ENCODE measurements at regions of chr10 and their contacts with region 1.

Region 1: DNA sequence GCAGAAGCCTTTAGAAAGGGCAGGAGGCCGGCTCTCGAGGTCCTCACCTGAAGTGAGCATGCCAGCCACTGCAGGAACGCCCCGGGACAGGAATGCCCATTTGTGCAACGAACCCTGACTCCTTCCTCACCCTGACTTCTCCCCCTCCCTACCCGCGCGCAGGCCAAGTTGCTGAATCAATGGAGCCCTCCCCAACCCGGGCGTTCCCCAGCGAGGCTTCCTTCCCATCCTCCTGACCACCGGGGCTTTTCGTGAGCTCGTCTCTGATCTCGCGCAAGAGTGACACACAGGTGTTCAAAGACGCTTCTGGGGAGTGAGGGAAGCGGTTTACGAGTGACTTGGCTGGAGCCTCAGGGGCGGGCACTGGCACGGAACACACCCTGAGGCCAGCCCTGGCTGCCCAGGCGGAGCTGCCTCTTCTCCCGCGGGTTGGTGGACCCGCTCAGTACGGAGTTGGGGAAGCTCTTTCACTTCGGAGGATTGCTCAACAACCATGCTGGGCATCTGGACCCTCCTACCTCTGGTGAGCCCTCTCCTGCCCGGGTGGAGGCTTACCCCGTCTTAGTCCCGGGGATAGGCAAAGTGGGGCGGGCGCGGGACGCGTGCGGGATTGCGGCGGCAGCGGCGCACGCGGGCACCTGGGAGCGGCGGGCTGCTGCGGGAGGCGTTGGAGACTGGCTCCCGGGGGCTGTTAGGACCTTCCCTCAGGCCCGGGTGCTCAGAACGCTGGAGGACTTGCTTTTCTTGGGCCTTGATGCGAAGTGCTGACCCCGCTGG is at the start of gene FAS:
- DNase-seq: peak; percentile 50 to 81 (median 61)
- ATAC-seq: peak; percentile 86
- H3K4me3 ChIP-seq: peak within 1 kb of the TSS; percentile 86
- H3K4me3 Mint-ChIP-seq: peak within 1 kb of the TSS; percentile 92 to 100 (median 96)
- H3K27ac ChIP-seq: peak within 1 kb of the TSS; percentile 77
- H3K27ac Mint-ChIP-seq: peak within 1 kb of the TSS; percentile 91 to 96 (median 94)
- H3K4me1 ChIP-seq: peaks cover 42 to 45% of the 10 kb centered on the region in 2 donors
- H3K4me1 Mint-ChIP-seq: peaks cover 41 to 83% (median 68%) of the 10 kb centered on the region in 7 donors
- H3K27me3 ChIP-seq: no peaks in the 10 kb centered on the region
- H3K27me3 Mint-ChIP-seq: no peaks in the 10 kb centered on the region
- total RNA-seq, gene FAS: 5.6 to 67.4 (median 8.3) TPM

Region 2: DNA sequence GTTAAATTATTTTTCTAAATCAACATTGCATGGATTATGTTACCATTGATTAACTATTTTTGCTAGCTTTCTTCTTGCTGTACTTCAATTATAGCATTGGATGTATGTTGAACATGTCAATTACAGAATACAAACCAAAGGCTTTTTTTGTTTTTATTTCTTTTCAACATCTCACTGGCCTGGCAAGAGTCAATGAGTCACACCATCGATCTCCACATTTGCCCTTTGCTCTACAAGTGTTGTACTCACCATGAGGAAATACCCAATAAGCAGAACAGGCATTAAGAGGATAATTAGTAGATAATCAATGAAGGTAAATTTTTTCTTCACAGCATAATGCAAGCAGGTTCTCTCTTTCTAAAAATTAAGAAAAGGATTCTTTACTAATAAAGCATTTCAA is 162.3 kb before region 1 on chr10:
- CTCF ChIA-PET with region 1: no interaction called
- POLR2A ChIA-PET with region 1: no interaction called
- intact Hi-C with region 1: loop called in 1 of 2 experiments (anchors 5 kb)
- DNase-seq: no peak
- ATAC-seq: no peak
- H3K4me3 ChIP-seq: no peak overlapping the region
- H3K4me3 Mint-ChIP-seq: no peak overlapping the region
- H3K27ac ChIP-seq: no peak overlapping the region
- H3K27ac Mint-ChIP-seq: peak overlapping the region in 2 of 9 donors; percentile 49 to 98
- H3K4me1 ChIP-seq: peaks cover 40 to 68% of the 10 kb centered on the region in 2 donors
- H3K4me1 Mint-ChIP-seq: peaks cover 32 to 80% (median 73%) of the 10 kb centered on the region in 7 donors
- H3K27me3 ChIP-seq: no peaks in the 10 kb centered on the region
- H3K27me3 Mint-ChIP-seq: no peaks in the 10 kb centered on the region

Region 3: DNA sequence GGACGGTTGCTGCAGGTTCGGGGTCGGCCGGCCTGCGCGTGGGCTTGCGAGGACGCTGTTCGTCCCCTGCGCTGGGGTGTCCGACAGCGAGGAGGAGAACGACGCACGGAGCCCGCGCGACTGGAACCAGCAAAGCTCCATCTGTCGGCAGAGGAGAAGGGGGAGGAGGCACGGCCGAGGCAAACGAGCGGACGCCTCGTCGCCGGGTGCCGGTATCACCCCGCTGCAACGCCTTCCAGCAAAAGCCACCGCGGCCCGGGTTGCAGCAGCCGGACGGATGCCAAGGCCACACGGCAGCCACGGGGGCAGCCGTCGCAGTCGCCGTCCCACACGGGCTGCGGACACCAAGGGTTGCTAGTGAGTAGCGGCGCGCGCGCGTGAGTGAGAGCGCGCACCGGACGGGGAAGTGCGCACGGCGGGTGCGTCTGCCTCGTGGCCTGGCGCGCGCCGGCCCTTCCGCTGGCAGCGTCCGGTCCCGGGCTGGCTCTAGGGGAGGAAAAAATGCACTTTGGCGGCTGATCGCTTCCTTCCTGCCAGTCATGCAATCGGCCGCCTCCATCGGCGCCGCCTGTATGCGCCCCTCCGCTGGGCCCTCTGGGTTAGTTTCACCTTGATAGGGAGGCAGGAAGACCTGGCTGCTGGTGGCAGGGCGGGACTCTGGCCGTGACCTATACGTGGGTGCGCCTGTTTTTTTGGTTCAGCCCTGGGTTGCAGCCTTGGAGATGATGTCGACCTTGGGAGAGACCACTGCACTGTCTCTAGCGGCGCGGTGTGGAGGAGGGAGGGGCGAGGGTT is 110.1 kb before region 1 on chr10:
- CTCF ChIA-PET with region 1: no interaction called
- POLR2A ChIA-PET with region 1: interaction called, 5 read pairs
- intact Hi-C with region 1: loop called (anchors 1 to 2 kb)
- DNase-seq: peak; percentile 58 to 79 (median 75)
- ATAC-seq: peak; percentile 84
- H3K4me3 ChIP-seq: peak overlapping the region; percentile 85
- H3K4me3 Mint-ChIP-seq: peak overlapping the region; percentile 95 to 100 (median 98)
- H3K27ac ChIP-seq: peak overlapping the region; percentile 74
- H3K27ac Mint-ChIP-seq: peak overlapping the region; percentile 82 to 97 (median 95)
- H3K4me1 ChIP-seq: peaks cover 43 to 44% of the 10 kb centered on the region in 2 donors
- H3K4me1 Mint-ChIP-seq: peaks cover 43 to 79% (median 69%) of the 10 kb centered on the region in 7 donors
- H3K27me3 ChIP-seq: no peaks in the 10 kb centered on the region
- H3K27me3 Mint-ChIP-seq: no peaks in the 10 kb centered on the region

Region 4: DNA sequence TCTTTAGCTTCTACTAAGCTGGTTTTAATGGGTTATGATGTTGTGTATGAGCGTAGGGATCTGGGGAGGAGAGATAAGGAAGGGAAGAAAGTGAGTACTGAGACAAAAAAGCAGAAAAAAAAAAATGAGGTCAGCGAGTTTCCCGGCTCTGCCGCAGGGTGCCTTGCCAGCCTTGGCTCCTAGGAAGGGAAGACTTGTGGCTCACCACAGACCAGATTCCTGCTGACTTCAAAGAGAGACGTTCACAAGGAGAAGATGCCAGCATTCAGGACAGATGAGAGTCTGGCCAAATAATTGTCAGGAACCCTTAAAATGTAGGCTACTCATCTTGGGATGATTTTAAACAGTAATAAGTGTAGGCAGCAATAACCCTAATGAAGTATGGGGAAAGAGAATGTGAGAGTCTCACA is 11.4 kb before region 1 on chr10:
- CTCF ChIA-PET with region 1: interaction called, 4 read pairs
- POLR2A ChIA-PET with region 1: interaction called, 7 read pairs
- intact Hi-C with region 1: loop called (anchors 1 kb)
- DNase-seq: no peak
- ATAC-seq: no peak
- H3K4me3 ChIP-seq: no peak overlapping the region
- H3K4me3 Mint-ChIP-seq: no peak overlapping the region
- H3K27ac ChIP-seq: no peak overlapping the region
- H3K27ac Mint-ChIP-seq: peak overlapping the region in 2 of 9 donors; percentile 32 to 33
- H3K4me1 ChIP-seq: peaks cover 7 to 12% of the 10 kb centered on the region in 2 donors
- H3K4me1 Mint-ChIP-seq: peaks cover 6 to 29% (median 18%) of the 10 kb centered on the region in 7 donors
- H3K27me3 ChIP-seq: no peaks in the 10 kb centered on the region
- H3K27me3 Mint-ChIP-seq: peaks cover 0 to 3% (median 0%) of the 10 kb centered on the region in 5 donors

Region 5: GRCh38 chr10:89086801-89087521 is 96.4 kb after region 1 on chr10:
- CTCF ChIA-PET with region 1: interaction called, 3 read pairs
- POLR2A ChIA-PET with region 1: no interaction called
- intact Hi-C with region 1: loop called in 1 of 2 experiments (anchors 2 kb)
- DNase-seq: no peak
- ATAC-seq: peak; percentile 67
- H3K4me3 ChIP-seq: no peak overlapping the region
- H3K4me3 Mint-ChIP-seq: peak overlapping the region in 1 of 10 donors; percentile 16
- H3K27ac ChIP-seq: no peak overlapping the region
- H3K27ac Mint-ChIP-seq: peak overlapping the region in 1 of 9 donors; percentile 15
- H3K4me1 ChIP-seq: peaks cover 6 to 9% of the 10 kb centered on the region in 2 donors
- H3K4me1 Mint-ChIP-seq: peaks cover 0 to 15% (median 0%) of the 10 kb centered on the region in 7 donors
- H3K27me3 ChIP-seq: no peaks in the 10 kb centered on the region
- H3K27me3 Mint-ChIP-seq: peaks cover 0 to 8% (median 0%) of the 10 kb centered on the region in 5 donors

Region 6: GRCh38 chr10:89643431-89644331 is 653.1 kb after region 1 on chr10:
- CTCF ChIA-PET with region 1: no interaction called
- POLR2A ChIA-PET with region 1: no interaction called
- intact Hi-C with region 1: loop called in 1 of 2 experiments (anchors 10 kb)
- DNase-seq: peak; percentile 22 to 78 (median 68)
- ATAC-seq: peak; percentile 94
- H3K4me3 ChIP-seq: peak overlapping the region; percentile 76
- H3K4me3 Mint-ChIP-seq: no peak overlapping the region
- H3K27ac ChIP-seq: peak overlapping the region; percentile 55
- H3K27ac Mint-ChIP-seq: peak overlapping the region in 2 of 9 donors; percentile 4 to 72
- H3K4me1 ChIP-seq: peaks cover 0 to 6% of the 10 kb centered on the region in 2 donors
- H3K4me1 Mint-ChIP-seq: peaks cover 6 to 13% (median 8%) of the 10 kb centered on the region in 7 donors
- H3K27me3 ChIP-seq: no peaks in the 10 kb centered on the region
- H3K27me3 Mint-ChIP-seq: peaks cover 0 to 23% (median 6%) of the 10 kb centered on the region in 5 donors

Measured in naive thymus-derived CD4-positive, alpha-beta T cell (primary cell).